MCF 10A (cell line): ENCODE measurements at regions of chr3 and their contacts with region 1.

Region 1: DNA sequence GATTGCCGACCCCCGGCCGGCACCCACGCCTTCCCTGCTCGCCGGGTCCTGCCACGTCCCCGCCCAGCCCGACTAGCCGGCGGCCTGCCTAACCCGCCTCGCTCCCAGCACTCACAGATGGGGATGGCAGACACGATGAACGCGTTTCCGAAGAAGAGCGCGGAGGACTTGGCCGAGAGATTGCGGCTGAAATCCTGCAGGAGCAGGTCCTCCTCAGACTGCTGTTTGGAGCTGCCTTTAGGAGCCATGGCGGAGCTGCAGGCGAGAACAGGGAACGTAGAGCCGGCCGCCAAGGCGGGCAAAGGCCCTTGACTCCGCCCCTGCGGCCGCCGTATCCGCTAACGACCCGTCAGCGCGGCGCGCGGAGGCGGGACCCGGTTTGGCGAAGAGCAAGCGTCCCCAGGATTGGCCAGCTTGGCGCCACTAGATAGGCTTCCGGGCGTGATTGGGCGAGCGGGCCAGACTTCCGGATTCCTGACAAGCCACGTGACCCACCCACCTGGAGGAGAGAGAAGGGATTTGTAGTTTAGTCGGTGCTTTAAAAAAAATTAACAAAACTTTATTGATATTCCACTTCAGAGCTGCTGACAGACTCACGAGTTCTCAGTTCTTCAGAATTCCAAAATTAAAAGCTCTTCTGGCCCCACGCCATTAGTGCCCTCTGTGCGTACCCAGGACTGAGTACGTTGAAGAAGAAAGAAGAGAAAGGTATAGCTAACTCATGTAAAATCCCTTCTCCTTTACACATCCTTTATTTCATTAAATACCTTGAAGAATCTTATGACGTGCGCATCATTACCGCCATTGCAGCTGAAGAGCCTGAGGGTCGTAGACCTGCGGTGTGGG is at the start of gene SSR3:
- DNase-seq: peak; percentile 99
- H3K4me3 Mint-ChIP-seq: peak within 1 kb of the TSS; percentile 89
- H3K27ac Mint-ChIP-seq: peak within 1 kb of the TSS; percentile 92
- H3K4me1 Mint-ChIP-seq: peaks cover 30% of the 10 kb centered on the region
- H3K27me3 Mint-ChIP-seq: no peaks in the 10 kb centered on the region
- CTCF ChIP-seq: peak; percentile 8
- total RNA-seq, gene SSR3: 447 and 568 TPM in 2 replicates

Region 2: GRCh38 chr3:156388497-156389448 is 166.3 kb before region 1 on chr3:
- CTCF ChIA-PET with region 1: no interaction called
- POLR2A ChIA-PET with region 1: no interaction called
- intact Hi-C with region 1: no loop called
- DNase-seq: no peak
- H3K4me3 Mint-ChIP-seq: no peak overlapping the region
- H3K27ac Mint-ChIP-seq: no peak overlapping the region
- H3K4me1 Mint-ChIP-seq: no peaks in the 10 kb centered on the region
- H3K27me3 Mint-ChIP-seq: peaks cover 97% of the 10 kb centered on the region
- CTCF ChIP-seq: no peak

Region 3: GRCh38 chr3:156460206-156460611 is 94.9 kb before region 1 on chr3:
- CTCF ChIA-PET with region 1: no interaction called
- POLR2A ChIA-PET with region 1: no interaction called
- intact Hi-C with region 1: no loop called
- DNase-seq: no peak
- H3K4me3 Mint-ChIP-seq: no peak overlapping the region
- H3K27ac Mint-ChIP-seq: no peak overlapping the region
- H3K4me1 Mint-ChIP-seq: peaks cover 5% of the 10 kb centered on the region
- H3K27me3 Mint-ChIP-seq: peaks cover 24% of the 10 kb centered on the region
- CTCF ChIP-seq: no peak

Region 4: DNA sequence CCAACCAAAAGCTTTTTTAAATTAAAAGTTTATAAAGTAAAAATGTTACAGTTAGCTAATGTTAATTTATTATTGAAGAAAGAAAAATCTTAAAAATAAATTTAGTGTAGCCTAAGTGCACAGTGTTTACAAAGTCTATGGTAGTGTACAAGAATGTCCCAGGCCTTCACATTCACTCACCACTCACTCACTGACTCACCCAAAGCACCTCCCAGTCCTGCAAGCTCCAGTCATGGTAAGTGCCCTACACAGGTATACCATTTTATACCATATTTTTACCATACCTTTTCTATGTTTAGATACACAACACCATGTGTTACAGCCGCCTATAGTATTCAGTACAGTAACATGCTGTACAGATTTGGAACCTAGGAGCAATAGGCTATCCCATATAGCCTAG is 29.3 kb before region 1 on chr3:
- CTCF ChIA-PET with region 1: no interaction called
- POLR2A ChIA-PET with region 1: interaction called, 11 read pairs
- intact Hi-C with region 1: no loop called
- DNase-seq: no peak
- H3K4me3 Mint-ChIP-seq: no peak overlapping the region
- H3K27ac Mint-ChIP-seq: no peak overlapping the region
- H3K4me1 Mint-ChIP-seq: no peaks in the 10 kb centered on the region
- H3K27me3 Mint-ChIP-seq: no peaks in the 10 kb centered on the region
- CTCF ChIP-seq: no peak

Region 5: DNA sequence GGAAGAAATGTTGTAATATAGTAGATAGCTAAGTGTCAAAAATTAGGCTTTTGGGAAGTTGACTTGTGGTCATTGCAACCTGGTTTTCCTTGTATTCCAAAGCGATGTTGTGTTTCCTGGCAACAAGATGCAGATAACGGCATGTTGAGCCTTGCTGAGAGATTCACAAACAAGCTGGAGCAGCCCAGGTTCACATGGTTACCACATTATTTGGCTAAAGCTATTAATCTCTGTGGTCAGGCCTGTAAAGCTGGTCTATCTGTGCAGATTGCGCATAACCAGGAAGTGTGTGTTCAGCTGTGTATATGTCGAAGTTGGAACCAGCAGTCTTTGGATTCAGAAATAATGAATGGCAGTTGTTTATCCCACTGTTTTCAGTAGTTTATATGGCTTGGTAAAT is 125.9 kb after region 1 on chr3:
- CTCF ChIA-PET with region 1: interaction called, 20 read pairs
- POLR2A ChIA-PET with region 1: interaction called, 157 read pairs
- intact Hi-C with region 1: no loop called
- DNase-seq: peak; percentile 90
- H3K4me3 Mint-ChIP-seq: peak overlapping the region; percentile 43
- H3K27ac Mint-ChIP-seq: peak overlapping the region; percentile 91
- H3K4me1 Mint-ChIP-seq: peaks cover 56% of the 10 kb centered on the region
- H3K27me3 Mint-ChIP-seq: no peaks in the 10 kb centered on the region
- CTCF ChIP-seq: no peak

Region 6: DNA sequence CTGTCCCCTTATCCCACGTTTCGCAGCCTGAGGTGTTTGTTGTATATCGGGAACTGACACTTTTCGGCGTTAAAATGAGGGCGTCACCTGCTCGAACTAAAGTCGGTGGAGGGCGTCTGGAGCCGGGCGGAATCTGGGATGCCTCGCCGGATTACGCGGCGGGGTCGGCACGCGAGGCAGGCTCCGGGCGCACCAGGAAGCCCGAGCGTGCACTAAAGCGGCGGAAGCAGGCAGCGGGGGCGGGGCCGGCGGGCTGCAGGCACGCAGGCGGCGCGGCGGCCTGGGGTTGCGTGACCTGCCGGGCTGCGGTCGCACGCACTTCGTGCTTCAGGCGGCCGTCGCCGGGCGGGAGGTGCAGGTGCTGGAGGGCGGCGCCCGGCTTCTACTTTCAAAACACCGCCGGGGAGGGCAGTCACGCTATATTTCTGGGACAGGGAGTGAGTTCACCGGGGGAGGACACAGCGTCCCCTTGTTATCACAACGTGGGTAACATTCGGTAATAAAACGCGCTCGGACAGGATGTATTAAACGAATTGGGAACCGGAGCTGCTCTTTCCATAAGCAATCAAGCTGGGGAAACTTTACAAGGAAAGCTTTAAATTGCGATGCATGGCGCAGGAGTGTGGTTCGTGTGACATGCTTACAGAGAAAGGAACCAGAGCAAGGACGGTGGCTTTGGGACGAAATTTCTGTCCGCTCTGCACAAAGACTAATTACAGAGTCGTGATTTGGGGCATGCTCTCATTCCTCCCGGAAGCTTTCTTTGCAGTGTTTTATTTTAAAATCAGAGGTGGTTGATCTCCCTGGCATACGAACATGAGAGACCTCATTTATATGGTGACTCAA is 262.0 kb after region 1 on chr3:
- CTCF ChIA-PET with region 1: no interaction called
- POLR2A ChIA-PET with region 1: interaction called, 18 read pairs
- intact Hi-C with region 1: loop called (anchors 2 kb)
- DNase-seq: peak; percentile 86
- H3K4me3 Mint-ChIP-seq: peak overlapping the region; percentile 82
- H3K27ac Mint-ChIP-seq: peak overlapping the region; percentile 95
- H3K4me1 Mint-ChIP-seq: peaks cover 41% of the 10 kb centered on the region
- H3K27me3 Mint-ChIP-seq: no peaks in the 10 kb centered on the region
- CTCF ChIP-seq: no peak

Region 7: GRCh38 chr3:157174649-157175498 is 619.8 kb after region 1 on chr3:
- CTCF ChIA-PET with region 1: no interaction called
- POLR2A ChIA-PET with region 1: interaction called, 17 read pairs
- intact Hi-C with region 1: no loop called
- DNase-seq: peak; percentile 99
- H3K4me3 Mint-ChIP-seq: peak overlapping the region; percentile 83
- H3K27ac Mint-ChIP-seq: peak overlapping the region; percentile 98
- H3K4me1 Mint-ChIP-seq: peaks cover 6% of the 10 kb centered on the region
- H3K27me3 Mint-ChIP-seq: no peaks in the 10 kb centered on the region
- CTCF ChIP-seq: no peak